HCT116 (cell line): ENCODE measurements at regions of chr5 and their contacts with region 1.

Region 1: DNA sequence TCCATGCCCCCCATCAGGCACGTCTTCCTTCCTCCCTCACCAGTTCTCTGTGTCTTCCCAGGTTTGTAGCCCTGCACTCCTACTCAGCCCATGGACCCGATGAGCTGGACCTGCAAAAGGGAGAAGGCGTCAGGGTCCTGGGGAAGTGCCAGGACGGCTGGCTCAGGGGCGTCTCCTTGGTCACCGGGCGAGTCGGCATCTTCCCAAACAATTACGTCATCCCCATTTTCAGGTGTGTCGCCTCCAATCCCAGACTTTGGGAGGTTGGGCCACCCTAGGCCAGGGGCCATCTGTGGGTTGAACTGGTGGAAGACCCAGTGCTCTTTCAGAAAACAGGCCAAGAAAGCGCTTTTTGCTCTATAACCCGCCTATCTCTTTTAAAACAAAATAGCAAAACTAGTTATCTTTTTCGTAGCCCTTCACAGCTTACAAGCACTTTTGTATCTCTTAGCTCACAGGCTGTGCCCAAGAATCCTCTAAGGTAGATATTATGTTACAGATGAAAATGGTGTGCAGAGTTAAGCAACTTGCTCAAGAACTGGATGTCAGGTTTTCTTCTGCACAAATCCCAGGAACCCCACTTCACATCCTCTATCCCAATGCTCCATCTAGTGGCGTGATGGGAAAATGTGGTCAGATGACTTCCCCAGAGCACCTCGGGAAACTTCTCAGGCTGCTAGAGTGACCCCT is 56.2 kb downstream of the PLAC8L1 start:
- DNase-seq: peak; percentile 48
- ATAC-seq: peak; percentile 78
- H3K4me3 ChIP-seq: no peak overlapping the region
- H3K27ac ChIP-seq: no peak overlapping the region
- H3K4me1 ChIP-seq: peaks cover 18 to 22% of the 10 kb centered on the region in 2 experiments
- H3K27me3 ChIP-seq: no peaks in the 10 kb centered on the region
- CTCF ChIP-seq: peak; percentile 76 to 78 (median 77)
- POLR2A ChIP-seq: no peak
- RAD21 ChIP-seq: peak; percentile 96

Region 2: DNA sequence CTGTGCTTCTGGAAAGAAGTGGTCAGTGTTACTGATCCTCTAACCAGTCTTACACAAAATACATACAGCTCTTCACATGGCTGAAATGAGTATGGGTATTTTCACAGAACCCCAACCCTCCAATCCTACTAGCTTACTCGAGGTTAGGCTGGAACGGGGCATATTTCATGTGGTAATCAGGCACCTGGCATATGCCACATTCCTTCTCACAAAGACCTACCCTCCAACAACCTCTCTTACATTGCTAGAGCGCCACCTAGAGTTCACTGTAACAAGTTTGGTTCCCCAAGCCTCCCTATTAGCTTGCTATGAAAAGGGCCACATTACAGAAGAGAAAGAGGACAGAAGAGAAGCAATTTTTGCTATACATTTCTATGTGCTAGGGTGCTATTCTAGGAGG is 811.3 kb before region 1 on chr5:
- CTCF ChIA-PET with region 1: no interaction called
- POLR2A ChIA-PET with region 1: no interaction called
- RAD21 ChIA-PET with region 1: no interaction called
- intact Hi-C with region 1: loop called (anchors 5 kb)
- DNase-seq: peak; percentile 69
- ATAC-seq: peak; percentile 99
- H3K4me3 ChIP-seq: no peak overlapping the region
- H3K27ac ChIP-seq: no peak overlapping the region
- H3K4me1 ChIP-seq: no peaks in the 10 kb centered on the region
- H3K27me3 ChIP-seq: no peaks in the 10 kb centered on the region
- CTCF ChIP-seq: peak; percentile 52 to 90 (median 75); a peak in 5 of 6 replicates
- POLR2A ChIP-seq: no peak
- RAD21 ChIP-seq: peak; percentile 80

Region 3: DNA sequence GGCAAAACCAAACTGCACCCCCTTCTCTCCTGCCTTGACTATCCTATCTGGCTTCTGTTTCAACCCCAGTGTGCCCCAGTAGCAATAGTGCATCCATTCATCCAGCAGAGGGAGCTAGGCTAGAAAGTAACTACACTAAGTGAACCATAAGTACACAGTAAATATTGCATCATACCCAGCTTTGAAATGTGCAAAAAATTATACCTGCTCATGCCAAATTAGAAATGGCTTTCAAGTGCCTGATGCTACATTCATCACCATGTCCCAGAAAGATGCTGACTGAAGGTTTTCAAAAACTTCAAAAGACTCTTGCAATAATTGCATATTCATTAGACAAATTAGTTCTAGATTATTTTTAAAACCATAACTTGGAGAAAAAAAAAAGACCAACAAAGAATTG is 367.5 kb before region 1 on chr5:
- CTCF ChIA-PET with region 1: interaction called, 3 read pairs
- POLR2A ChIA-PET with region 1: no interaction called
- RAD21 ChIA-PET with region 1: no interaction called
- intact Hi-C with region 1: loop called (anchors 1 kb)
- DNase-seq: peak; percentile 75
- ATAC-seq: peak; percentile 99
- H3K4me3 ChIP-seq: no peak overlapping the region
- H3K27ac ChIP-seq: no peak overlapping the region
- H3K4me1 ChIP-seq: no peaks in the 10 kb centered on the region; a peak in 1 of 4 replicates
- H3K27me3 ChIP-seq: no peaks in the 10 kb centered on the region
- CTCF ChIP-seq: peak; percentile 81 to 93 (median 91)
- POLR2A ChIP-seq: no peak
- RAD21 ChIP-seq: peak; percentile 79

Region 4: DNA sequence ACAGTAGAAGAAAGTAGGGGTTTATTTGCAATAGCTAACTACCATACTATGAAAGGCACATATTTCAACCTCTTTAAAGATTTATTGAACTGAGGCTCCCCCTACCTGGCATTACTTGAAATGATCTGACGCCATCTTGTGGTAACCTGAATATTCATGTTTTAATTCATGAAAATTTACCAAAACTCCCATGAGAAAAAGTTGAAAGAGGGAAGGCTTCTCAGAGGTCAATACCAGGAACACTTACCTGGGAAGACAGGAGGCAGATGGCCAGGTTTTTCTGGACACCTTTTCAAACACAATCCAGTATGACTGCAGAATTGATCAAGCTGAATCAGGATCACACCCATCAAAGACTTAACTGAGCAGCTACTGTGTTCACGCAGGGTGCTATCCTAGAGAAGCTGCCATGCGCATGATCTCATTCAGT is 223.4 kb before region 1 on chr5:
- CTCF ChIA-PET with region 1: no interaction called
- POLR2A ChIA-PET with region 1: no interaction called
- RAD21 ChIA-PET with region 1: no interaction called
- intact Hi-C with region 1: loop called (anchors 5 kb)
- DNase-seq: peak; percentile 39
- ATAC-seq: peak; percentile 78
- H3K4me3 ChIP-seq: no peak overlapping the region
- H3K27ac ChIP-seq: no peak overlapping the region
- H3K4me1 ChIP-seq: peaks cover 7 to 10% of the 10 kb centered on the region in 2 experiments
- H3K27me3 ChIP-seq: no peaks in the 10 kb centered on the region
- CTCF ChIP-seq: peak; percentile 69 to 98 (median 89)
- POLR2A ChIP-seq: no peak
- RAD21 ChIP-seq: peak; percentile 73

Region 5: DNA sequence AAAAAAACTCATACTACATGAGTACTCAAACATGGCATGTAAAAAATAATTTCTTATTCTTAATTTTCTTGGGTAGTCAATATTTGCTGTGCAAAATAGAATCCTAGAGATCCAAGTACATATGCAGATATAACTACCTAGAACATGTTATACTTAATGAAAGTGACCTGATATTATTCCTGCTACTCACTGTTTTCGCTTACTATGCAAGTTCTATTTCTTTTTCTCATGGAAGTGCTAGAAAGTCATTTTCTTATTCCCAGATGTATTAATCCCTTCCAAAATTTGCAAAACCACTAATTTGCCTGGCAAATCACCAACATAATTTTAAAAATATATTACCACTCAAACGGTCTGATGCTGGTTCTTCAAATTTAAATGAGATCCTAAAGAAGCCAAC is 75.4 kb after region 1 on chr5:
- CTCF ChIA-PET with region 1: no interaction called
- POLR2A ChIA-PET with region 1: no interaction called
- RAD21 ChIA-PET with region 1: no interaction called
- intact Hi-C with region 1: no loop called
- DNase-seq: no peak
- ATAC-seq: no peak
- H3K4me3 ChIP-seq: no peak overlapping the region
- H3K27ac ChIP-seq: no peak overlapping the region
- H3K4me1 ChIP-seq: no peaks in the 10 kb centered on the region
- H3K27me3 ChIP-seq: no peaks in the 10 kb centered on the region
- CTCF ChIP-seq: no peak
- POLR2A ChIP-seq: no peak
- RAD21 ChIP-seq: no peak

Region 6: DNA sequence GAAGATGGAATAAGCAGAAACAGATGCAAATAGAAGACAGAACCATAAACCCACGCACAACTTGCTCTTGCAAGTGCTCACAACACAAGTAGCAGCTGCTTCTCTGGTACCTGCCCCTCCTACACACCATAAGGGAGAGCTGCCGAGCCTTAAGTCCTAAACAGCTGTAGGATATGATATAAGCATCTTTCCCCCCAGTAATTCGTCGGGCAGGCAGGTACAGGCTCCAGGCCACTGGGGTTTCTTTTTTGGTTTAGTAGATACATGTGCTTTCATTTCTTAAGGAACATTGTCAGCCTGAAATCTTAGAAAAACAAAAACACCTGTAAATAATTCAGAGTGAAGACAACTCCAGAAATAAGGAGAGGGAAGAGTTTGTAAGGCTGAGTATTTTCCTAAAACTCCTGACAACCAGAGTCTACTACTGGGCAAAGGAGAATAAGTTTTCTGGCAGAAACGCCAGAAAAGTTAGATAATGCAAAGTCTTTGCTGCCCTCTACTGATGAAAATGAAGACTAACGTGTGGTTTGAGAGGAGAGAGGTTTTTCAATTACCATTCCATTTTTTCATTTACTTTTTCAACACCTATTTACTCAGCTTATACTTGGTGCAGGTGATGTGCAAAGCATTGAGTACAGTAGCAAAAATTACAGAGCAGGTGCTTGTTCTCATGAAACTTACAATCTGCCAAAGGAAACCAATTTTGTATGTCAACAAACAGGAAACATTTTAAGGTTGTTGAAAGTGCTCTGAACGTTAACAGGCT is 377.9 kb after region 1 on chr5:
- CTCF ChIA-PET with region 1: no interaction called
- POLR2A ChIA-PET with region 1: no interaction called
- RAD21 ChIA-PET with region 1: no interaction called
- intact Hi-C with region 1: loop called (anchors 10 kb)
- DNase-seq: peak; percentile 26
- ATAC-seq: peak; percentile 81
- H3K4me3 ChIP-seq: no peak overlapping the region
- H3K27ac ChIP-seq: no peak overlapping the region
- H3K4me1 ChIP-seq: no peaks in the 10 kb centered on the region
- H3K27me3 ChIP-seq: no peaks in the 10 kb centered on the region
- CTCF ChIP-seq: peak; percentile 60 to 80 (median 63); a peak in 5 of 6 replicates
- POLR2A ChIP-seq: no peak
- RAD21 ChIP-seq: peak; percentile 89